ENCODE measurements at regions of chr16 and their contacts with region 1.

Region 1: GRCh38 chr16:11396241-11397048 is 51.2 kb downstream of the RMI2 start:
- DNase-seq: peak; percentile 56
- H3K4me3 Mint-ChIP-seq: no peak overlapping the region
- H3K27ac Mint-ChIP-seq: no peak overlapping the region
- H3K4me1 Mint-ChIP-seq: no peaks in the 10 kb centered on the region
- H3K27me3 Mint-ChIP-seq: no peaks in the 10 kb centered on the region

Region 2: GRCh38 chr16:11417487-11417886 is 21.0 kb after region 1 on chr16:
- intact Hi-C with region 1: no loop called
- DNase-seq: no peak
- H3K4me3 Mint-ChIP-seq: no peak overlapping the region
- H3K27ac Mint-ChIP-seq: no peak overlapping the region
- H3K4me1 Mint-ChIP-seq: peaks cover 1% of the 10 kb centered on the region
- H3K27me3 Mint-ChIP-seq: no peaks in the 10 kb centered on the region

Region 3: GRCh38 chr16:11715246-11715947 is 319.0 kb after region 1 on chr16:
- intact Hi-C with region 1: loop called (anchors 5 kb)
- DNase-seq: no peak
- H3K4me3 Mint-ChIP-seq: no peak overlapping the region
- H3K27ac Mint-ChIP-seq: no peak overlapping the region
- H3K4me1 Mint-ChIP-seq: peaks cover 7% of the 10 kb centered on the region
- H3K27me3 Mint-ChIP-seq: no peaks in the 10 kb centered on the region

Measured in activated T-helper 2 cell treated with anti-CD3 and anti-CD28 coated beads, Interferon-gamma antibody, Interleukin-2, Interleukin-4, amounts not matched to agents 10 μg/mL and 5 μg/mL and 100 μg/mL, durations not matched to agents 14 hours and 24 hours and 36 hours (primary cell).